CD8-positive, alpha-beta memory T cell (primary cell): ENCODE measurements at regions of chr3 and their contacts with region 1.

Region 1: DNA sequence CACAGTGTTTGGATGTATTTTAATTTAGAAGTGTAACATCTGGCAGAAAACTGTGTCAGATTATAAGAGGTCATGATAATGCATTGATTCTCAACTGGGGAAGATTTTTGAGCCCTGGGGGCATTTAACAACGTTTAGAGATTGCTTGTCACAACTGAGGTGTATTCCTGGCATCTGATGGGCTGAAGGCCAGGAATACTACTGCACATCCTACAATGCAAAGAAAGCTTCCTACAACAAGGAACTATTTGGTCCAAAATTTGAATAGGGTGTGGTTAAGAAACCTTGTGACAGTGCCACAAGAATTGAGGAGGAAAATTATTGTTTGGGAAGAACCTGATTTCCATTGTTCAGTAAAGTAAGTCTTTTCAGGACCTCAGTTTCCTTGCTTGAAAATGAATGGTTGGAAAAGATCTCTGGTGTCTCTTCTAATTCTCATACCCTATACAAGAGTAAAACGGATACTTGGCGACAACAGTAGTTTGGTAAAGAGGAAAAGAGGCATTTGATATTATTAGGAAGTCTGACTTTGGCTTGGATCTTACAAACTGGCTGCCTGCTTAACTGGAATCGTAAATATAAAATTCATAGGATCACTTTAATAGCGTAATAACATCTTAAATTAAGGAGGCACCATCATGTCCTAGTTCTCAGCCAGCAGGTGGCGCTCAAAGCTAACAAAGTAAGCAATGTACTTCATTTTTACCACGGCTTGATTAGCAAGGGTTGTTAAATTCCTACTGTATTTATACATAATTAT is 4.3 kb downstream of the DAZL start:
- DNase-seq: peak; percentile 65 to 85 (median 75)
- H3K4me3 ChIP-seq: no peak overlapping the region
- H3K4me3 Mint-ChIP-seq: no peak overlapping the region
- H3K27ac ChIP-seq: no peak overlapping the region
- H3K27ac Mint-ChIP-seq: no peak overlapping the region
- H3K4me1 ChIP-seq: no peaks in the 10 kb centered on the region
- H3K4me1 Mint-ChIP-seq: peaks cover 3 to 18% (median 15%) of the 10 kb centered on the region in 3 donors
- H3K27me3 ChIP-seq: no peaks in the 10 kb centered on the region
- H3K27me3 Mint-ChIP-seq: peaks cover 1 to 10% of the 10 kb centered on the region in 2 donors

Region 2: DNA sequence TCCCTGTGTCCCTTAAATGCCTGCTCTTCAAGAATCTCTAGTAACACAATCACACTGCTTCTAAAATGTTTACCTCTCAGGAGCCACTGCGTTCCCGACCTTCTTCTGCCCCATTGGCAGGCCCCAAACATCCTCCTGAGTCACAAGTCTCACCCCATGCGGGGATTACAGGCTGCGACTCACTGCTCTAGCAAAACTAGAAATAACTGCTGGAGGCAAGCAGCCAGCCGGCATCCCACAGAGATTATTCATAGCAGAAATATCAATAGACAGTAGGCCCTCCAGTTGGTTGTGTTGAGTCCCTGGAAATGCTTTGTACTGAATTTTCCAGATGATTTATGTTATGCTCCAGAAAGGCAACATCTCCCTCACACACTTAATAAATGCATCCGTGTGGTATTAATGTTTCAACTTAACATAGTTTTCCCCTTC is 152.3 kb before region 1 on chr3:
- CTCF ChIA-PET with region 1: no interaction called
- POLR2A ChIA-PET with region 1: no interaction called
- DNase-seq: no peak
- H3K4me3 ChIP-seq: no peak overlapping the region
- H3K4me3 Mint-ChIP-seq: no peak overlapping the region
- H3K27ac ChIP-seq: no peak overlapping the region
- H3K27ac Mint-ChIP-seq: peak overlapping the region in 4 of 8 donors; percentile 1 to 72 (median 42)
- H3K4me1 ChIP-seq: no peaks in the 10 kb centered on the region
- H3K4me1 Mint-ChIP-seq: peaks cover 27 to 69% (median 29%) of the 10 kb centered on the region in 3 donors
- H3K27me3 ChIP-seq: no peaks in the 10 kb centered on the region
- H3K27me3 Mint-ChIP-seq: no peaks in the 10 kb centered on the region

Region 3: DNA sequence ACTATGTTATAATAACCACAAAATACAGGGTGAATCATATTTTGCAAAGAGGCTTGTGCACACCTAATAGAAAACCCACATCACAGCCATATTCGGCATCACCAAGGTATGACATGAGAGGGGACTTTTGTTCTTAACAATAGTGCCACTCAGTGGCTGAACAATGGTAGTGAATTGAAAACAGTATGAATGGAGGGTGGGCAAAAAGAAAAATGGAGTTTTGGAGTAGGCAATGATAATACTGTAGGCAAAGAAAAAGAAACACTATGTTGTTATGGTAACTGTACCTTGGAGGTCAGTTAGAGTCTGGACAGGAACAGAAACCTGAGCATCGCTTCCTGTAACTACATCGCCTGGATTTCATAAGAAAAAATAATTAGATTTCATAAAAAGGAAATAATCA is 632.4 kb after region 1 on chr3:
- CTCF ChIA-PET with region 1: interaction called, 16 read pairs
- POLR2A ChIA-PET with region 1: no interaction called
- DNase-seq: peak; percentile 1 to 56 (median 52)
- H3K4me3 ChIP-seq: no peak overlapping the region
- H3K4me3 Mint-ChIP-seq: no peak overlapping the region
- H3K27ac ChIP-seq: no peak overlapping the region
- H3K27ac Mint-ChIP-seq: peak overlapping the region in 3 of 8 donors; percentile 3 to 40 (median 6)
- H3K4me1 ChIP-seq: peaks cover 9% of the 10 kb centered on the region
- H3K4me1 Mint-ChIP-seq: peaks cover 10 to 25% (median 19%) of the 10 kb centered on the region in 3 donors
- H3K27me3 ChIP-seq: no peaks in the 10 kb centered on the region
- H3K27me3 Mint-ChIP-seq: no peaks in the 10 kb centered on the region

Region 4: DNA sequence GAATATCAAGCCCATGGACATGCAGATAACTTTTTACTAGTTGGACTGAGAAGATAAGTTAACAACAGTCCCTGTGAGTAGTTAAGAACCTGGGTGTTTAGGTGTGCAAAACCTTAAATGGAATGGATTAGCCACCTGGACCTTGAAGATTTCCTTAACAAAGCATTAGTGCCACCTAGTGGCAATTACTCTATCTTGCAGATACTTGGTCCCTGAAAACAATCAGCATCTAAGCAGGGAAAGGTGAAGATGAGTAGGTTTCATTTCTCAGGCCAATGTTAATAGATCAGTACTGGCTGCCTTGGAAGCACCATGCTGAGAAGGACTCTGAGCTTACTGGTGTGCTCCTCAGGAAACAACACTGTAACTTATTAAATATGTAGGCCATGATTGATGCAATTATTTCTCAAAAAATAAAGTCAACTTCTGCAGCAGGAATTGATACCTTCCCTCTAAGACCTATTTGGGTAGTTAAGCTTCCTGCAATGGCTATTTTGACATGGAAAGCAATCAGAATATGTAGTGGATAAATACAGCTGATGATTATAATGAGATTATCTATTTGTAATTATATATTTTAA is 812.1 kb after region 1 on chr3:
- CTCF ChIA-PET with region 1: interaction called, 16 read pairs
- POLR2A ChIA-PET with region 1: no interaction called
- DNase-seq: peak in 3 of 5 donors; percentile 25 to 45 (median 28)
- H3K4me3 ChIP-seq: no peak overlapping the region
- H3K4me3 Mint-ChIP-seq: no peak overlapping the region
- H3K27ac ChIP-seq: no peak overlapping the region
- H3K27ac Mint-ChIP-seq: no peak overlapping the region
- H3K4me1 ChIP-seq: no peaks in the 10 kb centered on the region
- H3K4me1 Mint-ChIP-seq: peaks cover 0 to 9% (median 3%) of the 10 kb centered on the region in 3 donors
- H3K27me3 ChIP-seq: no peaks in the 10 kb centered on the region
- H3K27me3 Mint-ChIP-seq: no peaks in the 10 kb centered on the region

Region 5: GRCh38 chr3:17841190-17841828 is 1240.3 kb after region 1 on chr3:
- CTCF ChIA-PET with region 1: interaction called, 10 read pairs
- POLR2A ChIA-PET with region 1: no interaction called
- DNase-seq: peak; percentile 38 to 72 (median 55)
- H3K4me3 ChIP-seq: no peak overlapping the region
- H3K4me3 Mint-ChIP-seq: no peak overlapping the region
- H3K27ac ChIP-seq: no peak overlapping the region
- H3K27ac Mint-ChIP-seq: no peak overlapping the region
- H3K4me1 ChIP-seq: no peaks in the 10 kb centered on the region
- H3K4me1 Mint-ChIP-seq: no peaks in the 10 kb centered on the region
- H3K27me3 ChIP-seq: no peaks in the 10 kb centered on the region
- H3K27me3 Mint-ChIP-seq: peaks cover 1 to 7% of the 10 kb centered on the region in 2 donors